Activated CD4-positive, alpha-beta memory T cell treated with anti-CD3 and anti-CD28 coated beads for 36 hours (primary cell): ENCODE measurements at regions of chr10 and their contacts with region 1.

Region 1: DNA sequence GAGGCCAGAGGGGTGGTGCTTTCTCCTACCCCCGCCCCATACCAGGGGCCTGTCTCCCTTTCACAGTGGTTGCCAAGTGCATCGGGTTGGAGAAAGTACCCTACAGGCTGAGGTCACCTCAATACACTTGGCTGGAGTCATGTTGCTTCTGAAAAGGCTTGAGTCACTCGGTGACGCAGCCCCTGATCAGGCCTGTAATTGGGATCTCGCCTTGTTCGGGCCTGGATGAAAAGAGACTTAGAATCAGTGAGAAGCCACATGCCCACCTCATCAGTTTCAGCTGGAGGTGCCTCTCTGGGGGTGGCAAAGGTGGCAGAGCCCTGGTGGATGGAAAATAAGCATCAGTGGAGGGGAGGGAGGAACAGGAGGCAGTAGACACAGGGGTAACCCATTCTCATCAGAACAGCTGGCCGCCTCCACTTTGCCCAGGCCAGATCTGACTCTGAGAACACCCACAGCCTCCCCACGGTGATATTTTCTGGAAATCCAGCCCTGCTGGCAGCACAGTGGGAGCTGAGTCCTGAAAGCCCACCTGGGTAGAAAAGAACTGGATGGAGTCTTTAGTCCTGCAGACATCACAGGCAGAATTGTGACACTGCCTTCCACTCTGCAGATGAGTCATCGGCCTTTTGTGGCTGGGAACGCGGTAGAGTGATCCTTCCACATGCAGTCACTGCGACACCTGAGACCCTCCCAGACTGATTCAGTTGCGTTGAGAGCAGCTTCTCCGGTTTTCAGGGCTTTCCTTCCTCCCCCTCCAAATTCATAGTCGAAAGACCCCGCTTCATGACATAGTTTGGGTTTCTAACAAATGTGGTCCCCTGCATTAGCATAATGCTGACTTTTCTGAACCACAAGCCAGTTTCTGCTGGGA is 108.0 kb downstream of the GRK5 start:
- DNase-seq: peak; percentile 90
- H3K4me3 Mint-ChIP-seq: peak overlapping the region; percentile 49
- H3K27ac Mint-ChIP-seq: peak overlapping the region; percentile 91
- H3K4me1 Mint-ChIP-seq: peaks cover 53% of the 10 kb centered on the region
- H3K27me3 Mint-ChIP-seq: peaks cover 5% of the 10 kb centered on the region

Region 2: DNA sequence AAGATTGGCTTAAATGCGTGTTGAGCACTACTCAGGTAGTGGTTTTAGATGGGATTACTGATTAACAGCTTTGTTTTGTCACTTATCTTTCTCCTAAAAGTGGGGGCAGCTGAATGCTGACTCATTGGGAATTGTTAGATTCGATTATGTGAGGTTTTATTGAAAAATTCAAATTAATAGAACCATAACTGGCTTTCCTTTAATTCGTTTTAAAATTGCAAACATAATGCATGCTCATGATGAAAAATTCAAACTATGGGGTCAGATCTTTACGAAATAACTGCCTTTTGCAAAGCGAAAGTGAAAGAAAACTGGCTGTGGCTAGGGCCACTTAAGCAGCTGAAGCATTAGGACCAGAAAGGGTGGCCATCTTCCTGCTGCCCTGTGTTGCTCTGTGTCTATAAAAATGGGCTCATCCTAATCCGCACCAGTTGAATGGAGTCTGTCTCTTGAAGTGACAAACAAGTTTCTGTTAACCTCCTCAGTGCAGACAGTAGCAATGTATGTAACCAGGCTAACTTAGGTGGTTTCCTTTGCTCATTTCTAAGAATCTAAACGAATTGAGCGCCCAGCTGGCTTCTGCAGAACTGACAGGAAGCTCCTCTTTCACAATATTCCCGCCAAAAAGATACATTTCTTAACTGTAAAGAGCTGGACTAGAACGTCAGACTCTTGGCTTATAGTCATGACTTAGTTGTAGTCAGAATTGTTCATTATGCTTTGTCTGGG is 183.7 kb before region 1 on chr10:
- CTCF ChIA-PET with region 1: no interaction called
- POLR2A ChIA-PET with region 1: interaction called, 3 read pairs
- intact Hi-C with region 1: loop called (anchors 2 kb)
- DNase-seq: peak; percentile 76
- H3K4me3 Mint-ChIP-seq: peak overlapping the region; percentile 80
- H3K27ac Mint-ChIP-seq: peak overlapping the region; percentile 100
- H3K4me1 Mint-ChIP-seq: peaks cover 60% of the 10 kb centered on the region
- H3K27me3 Mint-ChIP-seq: no peaks in the 10 kb centered on the region

Region 3: GRCh38 chr10:119268871-119269506 is 46.4 kb before region 1 on chr10:
- CTCF ChIA-PET with region 1: interaction called, 4 read pairs
- POLR2A ChIA-PET with region 1: interaction called, 4 read pairs
- intact Hi-C with region 1: loop called (anchors 1 kb)
- DNase-seq: peak; percentile 83
- H3K4me3 Mint-ChIP-seq: peak overlapping the region; percentile 7
- H3K27ac Mint-ChIP-seq: peak overlapping the region; percentile 97
- H3K4me1 Mint-ChIP-seq: peaks cover 43% of the 10 kb centered on the region
- H3K27me3 Mint-ChIP-seq: no peaks in the 10 kb centered on the region

Region 4: GRCh38 chr10:119416855-119417254 is 101.5 kb after region 1 on chr10:
- CTCF ChIA-PET with region 1: interaction called, 4 read pairs
- POLR2A ChIA-PET with region 1: no interaction called
- intact Hi-C with region 1: loop called (anchors 5 kb)
- DNase-seq: peak; percentile 81
- H3K4me3 Mint-ChIP-seq: no peak overlapping the region
- H3K27ac Mint-ChIP-seq: no peak overlapping the region
- H3K4me1 Mint-ChIP-seq: no peaks in the 10 kb centered on the region
- H3K27me3 Mint-ChIP-seq: no peaks in the 10 kb centered on the region